Colonic mucosa (tissue), 4 donors: ENCODE measurements at regions of chr13 and their contacts with region 1.

Region 1: DNA sequence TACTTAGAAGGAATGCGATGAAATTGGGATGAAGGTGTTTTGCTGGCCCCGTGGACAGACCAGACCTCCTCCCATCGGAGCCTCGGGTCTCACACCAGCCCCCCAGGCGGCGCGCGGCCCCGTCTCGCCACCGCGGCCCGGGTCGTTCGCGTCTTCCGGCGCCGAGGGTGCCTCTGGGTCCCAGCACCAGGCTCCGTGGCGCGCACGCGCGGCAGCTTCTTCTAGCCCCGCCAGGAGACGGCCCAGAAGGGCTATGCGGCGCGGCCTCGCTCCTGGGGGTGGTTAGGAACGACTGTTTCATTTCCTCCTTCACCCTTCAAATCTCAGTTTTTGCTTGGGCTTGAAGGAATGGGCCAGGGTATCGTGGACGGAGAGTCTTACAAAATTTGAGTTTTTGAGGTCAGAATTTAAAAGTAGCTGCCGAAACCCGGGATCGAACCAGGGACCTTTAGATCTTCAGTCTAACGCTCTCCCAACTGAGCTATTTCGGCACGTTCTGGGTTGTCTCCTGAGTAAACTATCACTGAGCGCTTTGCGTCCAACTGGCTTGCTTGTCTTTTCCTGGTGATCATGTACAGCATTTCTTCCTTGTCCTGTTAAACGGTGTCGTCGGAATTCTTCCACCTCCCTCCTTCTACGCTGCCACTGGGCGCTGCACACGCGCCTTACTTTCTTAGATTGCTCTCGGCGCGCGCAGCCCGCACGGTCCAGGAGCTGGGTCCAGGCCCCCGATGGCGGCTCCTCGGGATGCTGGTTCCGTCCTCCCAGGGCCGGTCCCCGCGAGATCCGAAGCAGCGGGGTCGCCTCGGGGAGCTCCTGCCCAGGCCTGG is 46.5 kb downstream of the TGDS start:
- DNase-seq: peak; percentile 94
- H3K4me3 ChIP-seq: peak overlapping the region; percentile 76
- H3K27ac ChIP-seq: peak overlapping the region; percentile 91
- H3K4me1 ChIP-seq: peaks cover 5% of the 10 kb centered on the region
- H3K27me3 ChIP-seq: no peaks in the 10 kb centered on the region
- CTCF ChIP-seq: no peak

Region 2: GRCh38 chr13:94595950-94596574 is 46.6 kb after region 1 on chr13 and contains the start of gene TGDS:
- intact Hi-C with region 1: loop called (anchors 5 kb)
- DNase-seq: peak; percentile 93
- H3K4me3 ChIP-seq: peak within 1 kb of the TSS; percentile 80
- H3K27ac ChIP-seq: peak within 1 kb of the TSS; percentile 76
- H3K4me1 ChIP-seq: peaks cover 10% of the 10 kb centered on the region
- H3K27me3 ChIP-seq: no peaks in the 10 kb centered on the region
- CTCF ChIP-seq: no peak
- total RNA-seq, gene TGDS: 7.2 to 9.3 TPM

Region 3: GRCh38 chr13:94731028-94731427 is 181.6 kb after region 1 on chr13:
- intact Hi-C with region 1: no loop called
- DNase-seq: no peak
- H3K4me3 ChIP-seq: no peak overlapping the region
- H3K27ac ChIP-seq: no peak overlapping the region
- H3K4me1 ChIP-seq: no peaks in the 10 kb centered on the region
- H3K27me3 ChIP-seq: no peaks in the 10 kb centered on the region
- CTCF ChIP-seq: no peak